ENCODE measurements at regions of chr1 and their contacts with region 1.

Region 1: GRCh38 chr1:12078938-12079861 is 16.1 kb downstream of the TNFRSF8 start:
- DNase-seq: peak; percentile 59
- ATAC-seq: peak; percentile 53
- H3K4me3 ChIP-seq: no peak overlapping the region
- H3K27ac ChIP-seq: no peak overlapping the region
- H3K4me1 ChIP-seq: 0 out of 2 replicates have a peak, but pooled peaks cover 4% of the 10 kb centered on the region
- H3K27me3 ChIP-seq: no peaks in the 10 kb centered on the region
- CTCF ChIP-seq: peak; percentile 68

Region 2: DNA sequence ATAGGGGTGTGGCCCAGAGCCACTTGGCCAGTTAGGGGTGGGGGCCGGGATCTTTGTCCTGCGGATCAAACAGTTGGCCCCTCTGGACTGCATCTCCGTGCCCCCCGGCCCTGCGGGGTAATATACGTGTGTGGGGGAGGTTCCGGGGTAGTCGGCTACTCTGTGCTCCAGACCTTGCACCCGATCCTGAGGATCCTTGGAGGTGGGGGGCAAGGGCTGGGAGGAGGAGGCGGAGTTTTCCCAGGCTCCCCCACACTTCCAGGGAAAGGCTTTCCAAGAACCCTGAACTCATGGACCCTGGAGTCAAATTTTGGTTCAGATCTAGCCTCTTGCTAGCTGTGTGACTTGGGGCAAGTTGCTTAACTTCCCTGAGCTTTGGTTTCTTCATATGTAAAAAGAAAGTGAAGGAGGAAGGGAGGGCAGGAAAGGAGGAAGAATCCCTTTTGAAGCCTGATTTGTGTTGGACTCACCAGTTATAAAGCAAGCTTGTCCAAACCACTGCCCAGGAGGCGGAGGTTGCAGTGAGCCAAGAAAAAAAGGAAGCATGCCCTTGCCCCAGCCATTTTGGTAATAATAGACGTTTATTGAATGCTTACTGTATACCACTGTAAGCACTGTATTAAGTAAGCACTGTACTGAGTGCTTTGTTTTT is 59.2 kb before region 1 on chr1:
- CTCF ChIA-PET with region 1: no interaction called
- POLR2A ChIA-PET with region 1: no interaction called
- intact Hi-C with region 1: loop called (anchors 2 kb)
- DNase-seq: no peak
- ATAC-seq: peak; percentile 3; the same call in 1 of the 2 replicates
- H3K4me3 ChIP-seq: peak overlapping the region; percentile 85
- H3K27ac ChIP-seq: no peak overlapping the region
- H3K4me1 ChIP-seq: no peaks in the 10 kb centered on the region
- H3K27me3 ChIP-seq: no peaks in the 10 kb centered on the region
- CTCF ChIP-seq: no peak

Region 3: GRCh38 chr1:12316331-12316730 is 237.1 kb after region 1 on chr1:
- CTCF ChIA-PET with region 1: no interaction called
- POLR2A ChIA-PET with region 1: no interaction called
- intact Hi-C with region 1: no loop called
- DNase-seq: no peak
- ATAC-seq: no peak
- H3K4me3 ChIP-seq: no peak overlapping the region
- H3K27ac ChIP-seq: no peak overlapping the region
- H3K4me1 ChIP-seq: no peaks in the 10 kb centered on the region
- H3K27me3 ChIP-seq: no peaks in the 10 kb centered on the region
- CTCF ChIP-seq: no peak

Measured in PC-3 (cell line).